ENCODE measurements at regions of chr18 and their contacts with region 1.

Region 1: DNA sequence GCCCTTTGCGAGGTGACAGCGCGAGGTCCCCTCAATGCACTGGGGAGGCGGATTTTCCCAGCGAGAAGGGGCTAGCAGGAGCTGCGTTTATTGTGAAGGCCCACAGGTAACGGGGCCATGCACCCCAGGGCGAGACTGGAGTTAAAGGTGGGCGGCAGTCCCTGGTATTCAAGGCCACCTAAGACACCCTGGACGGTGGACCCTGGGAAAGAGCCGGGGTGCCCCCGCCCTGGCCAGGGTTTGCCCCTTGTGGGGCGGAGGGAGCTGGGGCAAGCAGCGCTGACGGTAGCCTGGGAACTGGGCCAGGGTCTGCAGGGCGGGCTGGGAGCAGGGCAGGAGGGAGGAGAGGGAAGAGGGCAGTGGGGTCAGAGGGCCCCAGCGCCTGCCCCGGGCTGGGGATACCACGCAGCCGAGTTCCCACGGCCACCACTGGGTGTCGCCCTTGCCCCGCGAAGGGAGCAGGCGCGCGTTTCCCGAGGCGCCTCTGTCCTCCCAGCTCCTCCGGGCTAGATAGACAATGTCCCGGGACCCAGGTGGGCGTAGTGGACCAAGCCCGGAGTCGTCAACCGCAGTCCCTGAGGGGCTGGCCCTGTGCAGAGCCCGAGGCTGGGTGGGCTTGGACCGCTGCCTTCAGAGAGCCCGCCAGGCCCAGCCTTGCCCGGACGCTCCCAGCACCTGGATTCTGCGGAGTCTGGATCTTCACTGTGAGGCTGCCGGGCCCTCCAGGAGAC is 80.2 kb downstream of the SMAD4 start:
- DNase-seq: peak; percentile 68
- ATAC-seq: peak; percentile 78
- H3K4me3 ChIP-seq: no peak overlapping the region
- H3K4me3 Mint-ChIP-seq: no peak overlapping the region
- H3K27ac ChIP-seq: no peak overlapping the region
- H3K27ac Mint-ChIP-seq: no peak overlapping the region
- H3K4me1 ChIP-seq: peaks cover 8 to 18% of the 10 kb centered on the region in 2 donors
- H3K4me1 Mint-ChIP-seq: peaks cover 9% of the 10 kb centered on the region
- H3K27me3 ChIP-seq: no peaks in the 10 kb centered on the region
- H3K27me3 Mint-ChIP-seq: no peaks in the 10 kb centered on the region
- CTCF ChIP-seq: peak; percentile 99

Region 2: DNA sequence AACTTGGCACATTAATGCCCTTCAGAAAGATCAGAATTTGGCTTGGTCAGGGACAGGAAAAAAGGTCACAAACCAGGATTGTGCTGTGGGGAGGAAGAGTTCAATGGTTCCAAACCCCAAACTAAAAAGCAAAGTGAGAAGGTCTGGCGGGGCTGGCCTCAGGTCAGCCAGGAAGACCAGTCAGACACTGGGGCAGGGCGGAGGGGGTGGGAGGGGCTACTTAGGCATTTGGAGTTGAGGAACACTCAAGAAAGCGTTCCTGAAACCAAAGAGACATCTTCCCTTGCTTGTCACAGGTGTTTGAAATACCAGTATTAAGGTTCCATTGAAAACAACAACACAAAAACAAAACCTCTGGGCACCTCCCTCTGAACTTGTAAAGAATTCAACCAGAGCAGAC is 580.8 kb before region 1 on chr18:
- CTCF ChIA-PET with region 1: no interaction called
- POLR2A ChIA-PET with region 1: no interaction called
- intact Hi-C with region 1: no loop called
- DNase-seq: no peak
- ATAC-seq: no peak
- H3K4me3 ChIP-seq: no peak overlapping the region
- H3K4me3 Mint-ChIP-seq: no peak overlapping the region
- H3K27ac ChIP-seq: no peak overlapping the region
- H3K27ac Mint-ChIP-seq: no peak overlapping the region
- H3K4me1 ChIP-seq: no peaks in the 10 kb centered on the region
- H3K4me1 Mint-ChIP-seq: no peaks in the 10 kb centered on the region
- H3K27me3 ChIP-seq: no peaks in the 10 kb centered on the region
- H3K27me3 Mint-ChIP-seq: peaks cover 22% of the 10 kb centered on the region
- CTCF ChIP-seq: no peak

Region 3: DNA sequence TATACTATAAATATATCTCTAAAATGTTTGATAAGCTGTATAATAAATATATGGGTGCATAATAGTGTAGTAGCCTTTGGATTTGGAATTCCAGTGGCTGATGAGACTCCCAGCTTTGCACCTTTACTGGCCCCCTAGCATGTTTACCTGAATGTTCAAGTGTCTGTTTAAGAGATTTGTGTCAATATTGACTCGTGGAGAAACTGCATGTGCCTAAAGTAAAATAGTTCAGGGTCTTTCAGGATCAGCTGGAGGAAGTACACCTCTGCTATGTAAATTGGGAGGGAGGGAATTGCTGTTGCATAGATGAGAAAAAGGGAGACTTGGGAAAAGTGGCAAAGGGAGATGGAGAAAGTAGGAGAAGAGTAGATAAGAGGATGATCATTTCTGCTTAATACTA is 207.4 kb before region 1 on chr18:
- CTCF ChIA-PET with region 1: no interaction called
- POLR2A ChIA-PET with region 1: no interaction called
- intact Hi-C with region 1: no loop called
- DNase-seq: no peak
- ATAC-seq: no peak
- H3K4me3 ChIP-seq: no peak overlapping the region
- H3K4me3 Mint-ChIP-seq: no peak overlapping the region
- H3K27ac ChIP-seq: no peak overlapping the region
- H3K27ac Mint-ChIP-seq: no peak overlapping the region
- H3K4me1 ChIP-seq: peaks cover 0 to 3% of the 10 kb centered on the region in 2 donors
- H3K4me1 Mint-ChIP-seq: peaks cover 12% of the 10 kb centered on the region
- H3K27me3 ChIP-seq: no peaks in the 10 kb centered on the region
- H3K27me3 Mint-ChIP-seq: no peaks in the 10 kb centered on the region
- CTCF ChIP-seq: no peak

Region 4: DNA sequence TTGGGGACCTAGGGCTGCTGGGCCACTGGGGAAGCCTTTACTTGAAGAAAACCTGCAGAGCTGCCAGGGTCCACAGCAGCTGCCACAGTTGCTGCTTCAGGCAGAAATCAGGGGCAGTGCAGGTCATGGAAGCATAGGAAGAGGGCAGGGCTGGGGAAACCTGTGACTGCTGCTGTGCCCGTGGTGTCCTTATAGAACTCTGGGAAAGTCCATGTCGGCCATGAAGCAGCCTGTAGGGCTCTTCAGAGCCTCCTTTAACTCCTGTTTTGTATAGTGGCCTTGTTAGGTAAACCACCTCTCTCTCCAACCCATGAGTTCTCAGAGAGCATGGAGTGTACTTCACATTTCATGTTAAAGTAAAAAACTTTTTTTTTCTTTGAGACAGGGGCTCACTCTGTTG is 18.1 kb before region 1 on chr18:
- CTCF ChIA-PET with region 1: no interaction called
- POLR2A ChIA-PET with region 1: no interaction called
- intact Hi-C with region 1: no loop called
- DNase-seq: no peak
- ATAC-seq: no peak
- H3K4me3 ChIP-seq: no peak overlapping the region
- H3K4me3 Mint-ChIP-seq: no peak overlapping the region
- H3K27ac ChIP-seq: no peak overlapping the region
- H3K27ac Mint-ChIP-seq: no peak overlapping the region
- H3K4me1 ChIP-seq: no peaks in the 10 kb centered on the region
- H3K4me1 Mint-ChIP-seq: no peaks in the 10 kb centered on the region
- H3K27me3 ChIP-seq: no peaks in the 10 kb centered on the region
- H3K27me3 Mint-ChIP-seq: no peaks in the 10 kb centered on the region
- CTCF ChIP-seq: no peak

Region 5: GRCh38 chr18:51251625-51252024 is 141.4 kb after region 1 on chr18:
- CTCF ChIA-PET with region 1: no interaction called
- POLR2A ChIA-PET with region 1: no interaction called
- intact Hi-C with region 1: no loop called
- DNase-seq: peak; percentile 89
- ATAC-seq: peak; percentile 99
- H3K4me3 ChIP-seq: no peak overlapping the region
- H3K4me3 Mint-ChIP-seq: no peak overlapping the region
- H3K27ac ChIP-seq: peak overlapping the region in 1 of 2 donors; percentile 27
- H3K27ac Mint-ChIP-seq: peak overlapping the region; percentile 86
- H3K4me1 ChIP-seq: peaks cover 14 to 19% of the 10 kb centered on the region in 2 donors
- H3K4me1 Mint-ChIP-seq: peaks cover 21% of the 10 kb centered on the region
- H3K27me3 ChIP-seq: no peaks in the 10 kb centered on the region
- H3K27me3 Mint-ChIP-seq: peaks cover 3% of the 10 kb centered on the region
- CTCF ChIP-seq: no peak

Region 6: GRCh38 chr18:51383711-51384110 is 273.5 kb after region 1 on chr18:
- CTCF ChIA-PET with region 1: interaction called, 3 read pairs
- POLR2A ChIA-PET with region 1: no interaction called
- intact Hi-C with region 1: loop called (anchors 1 kb)
- DNase-seq: no peak
- ATAC-seq: no peak
- H3K4me3 ChIP-seq: no peak overlapping the region
- H3K4me3 Mint-ChIP-seq: no peak overlapping the region
- H3K27ac ChIP-seq: no peak overlapping the region
- H3K27ac Mint-ChIP-seq: no peak overlapping the region
- H3K4me1 ChIP-seq: no peaks in the 10 kb centered on the region
- H3K4me1 Mint-ChIP-seq: no peaks in the 10 kb centered on the region
- H3K27me3 ChIP-seq: peaks cover 0 to 7% (median 2%) of the 10 kb centered on the region in 4 experiments
- H3K27me3 Mint-ChIP-seq: peaks cover 12% of the 10 kb centered on the region
- CTCF ChIP-seq: no peak

Region 7: GRCh38 chr18:51668101-51668500 is 557.9 kb after region 1 on chr18:
- CTCF ChIA-PET with region 1: interaction called, 14 read pairs
- POLR2A ChIA-PET with region 1: no interaction called
- intact Hi-C with region 1: no loop called
- DNase-seq: peak; percentile 42
- ATAC-seq: peak; percentile 39
- H3K4me3 ChIP-seq: no peak overlapping the region
- H3K4me3 Mint-ChIP-seq: no peak overlapping the region
- H3K27ac ChIP-seq: no peak overlapping the region
- H3K27ac Mint-ChIP-seq: no peak overlapping the region
- H3K4me1 ChIP-seq: peaks cover 0 to 3% of the 10 kb centered on the region in 2 donors
- H3K4me1 Mint-ChIP-seq: peaks cover 6% of the 10 kb centered on the region
- H3K27me3 ChIP-seq: peaks cover 0 to 12% (median 1%) of the 10 kb centered on the region in 4 experiments
- H3K27me3 Mint-ChIP-seq: peaks cover 38% of the 10 kb centered on the region
- CTCF ChIP-seq: peak; percentile 64